Activated naive CD4-positive, alpha-beta T cell treated with anti-CD3 and anti-CD28 coated beads for 36 hours (primary cell): ENCODE measurements at regions of chr3 and their contacts with region 1.

Region 1: DNA sequence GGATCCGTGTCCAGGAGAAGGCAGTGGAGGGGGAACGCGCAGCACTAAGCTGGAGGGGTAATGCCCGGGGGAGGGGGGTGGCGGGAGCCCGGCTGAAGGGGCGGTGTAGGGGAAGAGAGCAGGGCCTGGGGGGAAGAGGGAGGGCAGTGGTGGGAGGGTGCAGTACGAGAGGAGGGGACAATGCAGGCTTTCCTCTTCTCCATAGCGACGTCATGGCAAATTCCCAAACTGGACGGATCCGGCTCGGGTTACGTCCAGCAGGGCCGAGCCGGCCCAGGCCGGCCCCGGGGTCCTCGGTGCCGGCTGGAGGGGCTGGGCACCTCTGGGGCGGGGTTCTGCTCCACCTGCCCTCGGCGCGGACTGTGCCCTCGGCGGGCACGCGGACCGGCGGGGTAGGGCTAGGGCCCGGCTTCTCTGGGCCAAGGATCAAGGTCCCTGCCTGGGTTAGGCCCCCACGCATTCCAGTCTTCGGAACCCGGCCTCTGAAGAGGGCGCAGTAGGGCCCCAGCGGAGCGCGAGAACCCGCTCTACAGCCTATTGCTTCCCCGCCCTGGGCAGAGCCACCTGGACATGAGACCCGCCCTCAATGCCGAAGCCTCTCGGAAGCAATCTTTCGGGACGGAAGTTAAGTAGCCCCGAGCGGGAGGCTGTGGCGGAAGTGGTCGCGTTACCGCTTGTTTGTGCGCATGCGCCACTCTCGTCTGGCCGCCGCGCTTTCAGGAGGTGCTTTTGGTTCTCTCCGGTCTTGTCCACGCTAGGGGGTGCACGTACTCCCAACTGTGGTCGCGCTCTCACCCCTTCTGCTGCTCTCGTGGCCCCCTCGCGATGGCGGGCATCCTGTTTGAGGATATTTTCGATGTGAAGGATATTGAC is 1.4 kb downstream of the POLR2H start:
- DNase-seq: peak; percentile 97
- H3K4me3 Mint-ChIP-seq: peak overlapping the region; percentile 97
- H3K27ac Mint-ChIP-seq: peak overlapping the region; percentile 94
- H3K4me1 Mint-ChIP-seq: peaks cover 30% of the 10 kb centered on the region
- H3K27me3 Mint-ChIP-seq: no peaks in the 10 kb centered on the region

Region 2: DNA sequence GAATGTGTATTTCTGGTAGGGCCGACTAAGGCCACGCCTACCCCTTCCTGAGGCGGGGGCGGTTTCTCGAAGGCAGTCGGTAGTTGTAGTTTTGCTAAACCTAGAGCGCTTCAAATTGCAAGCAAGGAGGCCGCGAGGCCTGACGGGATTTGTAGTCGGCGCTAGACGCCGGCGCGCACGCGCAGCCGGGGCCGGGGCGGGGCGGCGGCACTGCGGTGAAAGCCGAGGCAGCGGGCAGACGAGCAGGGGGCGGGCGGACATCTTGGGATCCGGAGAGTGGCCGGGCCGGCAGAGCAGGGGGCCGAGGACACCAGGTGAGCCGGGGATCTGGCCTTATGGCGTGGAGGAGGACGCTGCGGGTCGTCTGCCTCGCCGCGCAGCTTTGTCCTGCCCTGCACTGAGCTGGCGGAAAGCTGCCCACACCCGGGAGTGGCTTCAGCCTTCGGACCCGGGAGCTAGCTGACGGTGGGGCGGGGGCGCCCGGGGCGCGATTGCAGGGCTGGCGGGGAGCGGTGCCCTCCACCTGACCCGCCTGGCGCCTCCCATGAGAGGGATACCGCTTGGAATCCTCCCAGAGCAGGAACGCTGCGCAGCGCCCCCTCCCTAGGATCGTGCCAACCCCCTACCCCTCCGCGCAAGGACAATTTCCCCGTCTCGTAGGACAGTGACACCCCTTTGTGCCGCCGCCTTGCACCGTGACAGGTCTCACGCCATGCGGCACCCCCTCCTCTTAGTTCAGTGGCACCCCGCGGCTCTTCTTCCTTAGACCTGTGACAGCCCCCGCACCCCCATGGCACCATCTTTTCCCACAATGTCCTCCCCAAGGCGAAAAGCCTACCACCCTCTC is 188.0 kb before region 1 on chr3 and contains the start of gene AP2M1:
- CTCF ChIA-PET with region 1: no interaction called
- intact Hi-C with region 1: loop called (anchors 1 kb)
- DNase-seq: peak; percentile 98
- H3K4me3 Mint-ChIP-seq: peak within 1 kb of the TSS; percentile 88
- H3K27ac Mint-ChIP-seq: peak within 1 kb of the TSS; percentile 56
- H3K4me1 Mint-ChIP-seq: peaks cover 29% of the 10 kb centered on the region
- H3K27me3 Mint-ChIP-seq: no peaks in the 10 kb centered on the region
- total RNA-seq, gene AP2M1: 206 to 212 TPM

Region 3: DNA sequence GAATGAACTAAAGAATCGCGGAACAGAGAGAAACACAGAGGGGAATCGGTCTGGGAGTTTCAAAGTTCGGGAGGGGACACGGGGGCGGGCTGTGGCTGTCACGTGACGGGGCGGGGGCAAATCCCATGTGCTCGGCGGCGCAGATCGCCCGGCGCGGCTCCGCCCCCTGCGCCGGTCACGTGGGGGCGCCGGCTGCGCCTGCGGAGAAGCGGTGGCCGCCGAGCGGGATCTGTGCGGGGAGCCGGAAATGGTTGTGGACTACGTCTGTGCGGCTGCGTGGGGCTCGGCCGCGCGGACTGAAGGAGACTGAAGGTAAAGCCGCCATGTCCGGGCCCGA is 48.6 kb before region 1 on chr3 and contains the start of gene EIF4G1:
- CTCF ChIA-PET with region 1: no interaction called
- intact Hi-C with region 1: loop called (anchors 1 kb)
- DNase-seq: peak; percentile 93
- H3K4me3 Mint-ChIP-seq: peak within 1 kb of the TSS; percentile 86
- H3K27ac Mint-ChIP-seq: peak within 1 kb of the TSS; percentile 90
- H3K4me1 Mint-ChIP-seq: peaks cover 29% of the 10 kb centered on the region
- H3K27me3 Mint-ChIP-seq: no peaks in the 10 kb centered on the region
- total RNA-seq, gene EIF4G1: 345 to 375 TPM

Region 4: GRCh38 chr3:184523825-184524615 is 161.1 kb after region 1 on chr3:
- CTCF ChIA-PET with region 1: interaction called, 3 read pairs
- intact Hi-C with region 1: loop called (anchors 5 kb)
- DNase-seq: peak; percentile 45
- H3K4me3 Mint-ChIP-seq: no peak overlapping the region
- H3K27ac Mint-ChIP-seq: peak overlapping the region; percentile 60
- H3K4me1 Mint-ChIP-seq: peaks cover 11% of the 10 kb centered on the region
- H3K27me3 Mint-ChIP-seq: peaks cover 4% of the 10 kb centered on the region

Region 5: GRCh38 chr3:184777336-184778004 is 414.6 kb after region 1 on chr3:
- CTCF ChIA-PET with region 1: no interaction called
- intact Hi-C with region 1: loop called (anchors 5 kb)
- DNase-seq: peak; percentile 94
- H3K4me3 Mint-ChIP-seq: no peak overlapping the region
- H3K27ac Mint-ChIP-seq: no peak overlapping the region
- H3K4me1 Mint-ChIP-seq: no peaks in the 10 kb centered on the region
- H3K27me3 Mint-ChIP-seq: peaks cover 7% of the 10 kb centered on the region